Activated CD4-positive, alpha-beta T cell treated with anti-CD3 and anti-CD28 coated beads for 36 hours (primary cell): ENCODE measurements at regions of chr19 and their contacts with region 1.

Region 1: DNA sequence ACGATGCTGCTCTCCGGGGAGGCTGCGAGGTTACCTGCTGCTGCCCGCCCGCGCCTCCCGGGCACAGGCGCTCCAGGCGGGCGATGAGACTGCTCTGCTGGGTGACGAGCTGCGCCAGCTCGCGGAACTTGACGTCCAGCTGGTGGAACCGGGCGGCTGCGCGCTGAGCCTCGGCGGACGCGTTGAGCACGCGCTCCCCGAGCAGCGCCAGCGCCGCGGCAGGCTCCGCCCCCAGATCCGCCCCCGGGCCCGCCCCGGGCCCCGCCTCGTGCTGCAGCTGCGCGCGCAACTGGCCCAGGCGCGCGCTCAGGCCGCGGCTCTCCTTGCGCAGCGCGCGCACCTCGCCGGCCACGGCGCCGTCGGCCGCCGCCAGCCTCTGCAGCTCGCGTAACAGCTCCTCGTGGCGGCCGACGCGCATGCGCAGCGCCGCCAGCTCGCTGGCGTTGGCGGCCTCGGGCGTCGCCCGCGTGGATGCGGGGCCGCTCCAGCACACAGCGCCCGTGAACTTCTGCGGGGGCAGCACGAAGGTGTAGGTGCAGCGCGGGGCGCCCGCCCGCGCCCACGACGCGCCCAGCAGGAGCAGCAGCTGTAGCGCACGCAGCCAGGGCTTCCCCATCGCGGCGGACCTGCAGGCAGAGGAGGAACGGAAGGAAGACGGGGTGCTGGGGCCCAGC is 6.4 kb downstream of the ANGPTL6 start:
- DNase-seq: peak; percentile 94
- ATAC-seq: peak; percentile 90
- H3K4me3 Mint-ChIP-seq: peak overlapping the region; percentile 56
- H3K27ac Mint-ChIP-seq: peak overlapping the region; percentile 69
- H3K4me1 Mint-ChIP-seq: peaks cover 26% of the 10 kb centered on the region
- H3K27me3 Mint-ChIP-seq: no peaks in the 10 kb centered on the region

Region 2: DNA sequence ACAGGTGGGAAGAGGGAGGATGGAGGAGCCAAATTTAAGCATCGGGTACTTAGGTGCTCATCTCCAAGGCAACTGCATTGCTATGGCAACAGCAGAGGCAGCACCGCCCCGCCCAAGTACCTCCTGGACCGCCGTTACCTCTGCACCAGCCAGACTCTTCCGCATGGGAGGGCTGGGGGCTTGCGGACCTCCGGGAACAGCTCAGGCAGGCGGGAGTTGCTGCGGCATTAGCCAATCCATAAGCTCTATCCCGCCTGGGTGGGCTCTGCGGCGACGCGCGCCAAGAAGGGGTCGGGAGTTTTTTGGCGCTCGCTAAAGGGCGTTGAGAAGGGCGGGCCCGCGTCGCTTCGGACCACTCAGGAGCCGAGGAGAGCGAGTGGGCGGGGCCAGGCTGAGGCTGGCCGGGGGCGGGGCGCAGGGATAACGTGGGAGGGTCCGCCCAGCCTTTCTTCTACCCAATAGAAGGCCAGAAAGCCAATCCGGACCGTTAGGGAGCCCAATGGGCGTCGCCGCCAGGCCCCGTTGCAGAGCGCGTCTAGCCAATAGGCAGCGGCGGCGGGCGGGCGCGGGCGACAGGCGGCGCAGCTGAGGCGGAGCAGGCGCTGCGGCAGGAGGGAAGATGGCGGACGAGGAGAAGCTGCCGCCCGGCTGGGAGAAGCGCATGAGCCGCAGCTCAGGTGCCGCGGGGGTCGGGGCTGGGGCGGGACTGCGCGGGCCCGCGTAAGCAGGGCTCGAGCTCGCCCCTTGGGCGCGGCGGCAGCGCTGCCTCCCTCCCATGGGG is 261.2 kb before region 1 on chr19 and contains the start of gene PIN1:
- CTCF ChIA-PET with region 1: no interaction called
- POLR2A ChIA-PET with region 1: no interaction called
- intact Hi-C with region 1: loop called in 1 of 2 experiments (anchors 2 kb)
- DNase-seq: peak; percentile 100
- ATAC-seq: peak; percentile 99
- H3K4me3 Mint-ChIP-seq: peak within 1 kb of the TSS; percentile 86
- H3K27ac Mint-ChIP-seq: peak within 1 kb of the TSS; percentile 88
- H3K4me1 Mint-ChIP-seq: peaks cover 20% of the 10 kb centered on the region
- H3K27me3 Mint-ChIP-seq: no peaks in the 10 kb centered on the region
- total RNA-seq, gene PIN1: 70.4 to 74.2 TPM

Region 3: DNA sequence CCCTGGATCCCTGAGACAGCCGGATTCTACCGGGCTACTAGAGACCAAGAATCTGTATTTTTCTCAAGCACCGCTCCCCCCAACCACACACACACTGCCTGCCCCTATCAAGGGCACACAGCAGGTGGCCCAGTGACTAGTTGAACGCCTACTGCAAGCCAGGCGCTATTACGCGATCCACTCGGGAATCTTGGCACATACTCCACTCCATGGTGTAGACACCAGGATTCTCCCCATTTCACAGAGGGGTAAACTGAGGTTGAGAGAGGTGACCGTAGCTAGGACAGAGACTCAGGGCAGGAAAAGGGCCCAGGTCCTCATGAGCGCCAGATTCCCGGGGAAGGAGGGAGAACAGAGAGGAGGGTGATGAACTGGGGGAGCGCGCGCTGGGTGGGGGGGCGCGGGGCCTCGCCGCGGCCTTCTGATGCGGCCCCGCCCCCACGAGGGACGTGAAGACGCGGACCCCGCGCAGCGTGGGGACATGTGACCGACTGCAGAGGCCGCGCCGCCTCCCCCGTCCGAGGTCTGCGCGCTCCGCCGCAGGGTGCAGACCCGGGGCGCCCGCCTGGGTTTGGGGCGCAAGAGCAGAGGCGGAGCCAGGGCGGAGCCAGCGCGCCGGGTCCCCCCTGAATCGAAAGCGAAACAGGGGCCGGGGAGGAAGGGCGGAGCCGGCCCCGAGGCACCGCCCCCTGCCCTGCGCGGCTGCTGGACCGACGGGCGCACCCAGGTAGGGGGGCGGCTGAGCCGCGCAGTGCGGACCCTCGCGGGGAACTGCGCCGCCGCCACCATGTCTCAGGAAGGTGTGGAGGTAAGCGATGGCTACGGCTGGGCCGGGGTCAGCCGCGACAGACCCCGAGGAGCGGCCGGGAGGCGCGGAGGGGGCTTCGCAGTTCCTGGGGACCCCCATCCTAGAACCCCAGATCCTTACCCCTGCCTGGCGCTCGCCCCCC is 10.2 kb before region 1 on chr19 and contains the start of gene SHFL:
- CTCF ChIA-PET with region 1: interaction called, 4 read pairs
- POLR2A ChIA-PET with region 1: no interaction called
- intact Hi-C with region 1: loop called (anchors 1 kb)
- DNase-seq: peak; percentile 92
- ATAC-seq: peak; percentile 96
- H3K4me3 Mint-ChIP-seq: peak within 1 kb of the TSS; percentile 78
- H3K27ac Mint-ChIP-seq: peak within 1 kb of the TSS; percentile 74
- H3K4me1 Mint-ChIP-seq: peaks cover 11% of the 10 kb centered on the region
- H3K27me3 Mint-ChIP-seq: no peaks in the 10 kb centered on the region
- total RNA-seq, gene SHFL: 49.8 to 62.6 TPM

Region 4: GRCh38 chr19:10112895-10113591 is 17.0 kb after region 1 on chr19:
- CTCF ChIA-PET with region 1: interaction called, 12 read pairs
- POLR2A ChIA-PET with region 1: interaction called, 4 read pairs
- intact Hi-C with region 1: loop called in 1 of 2 experiments (anchors 2 kb)
- DNase-seq: peak; percentile 83
- ATAC-seq: peak; percentile 50
- H3K4me3 Mint-ChIP-seq: peak overlapping the region; percentile 68
- H3K27ac Mint-ChIP-seq: peak overlapping the region; percentile 90
- H3K4me1 Mint-ChIP-seq: peaks cover 59% of the 10 kb centered on the region
- H3K27me3 Mint-ChIP-seq: no peaks in the 10 kb centered on the region

Region 5: DNA sequence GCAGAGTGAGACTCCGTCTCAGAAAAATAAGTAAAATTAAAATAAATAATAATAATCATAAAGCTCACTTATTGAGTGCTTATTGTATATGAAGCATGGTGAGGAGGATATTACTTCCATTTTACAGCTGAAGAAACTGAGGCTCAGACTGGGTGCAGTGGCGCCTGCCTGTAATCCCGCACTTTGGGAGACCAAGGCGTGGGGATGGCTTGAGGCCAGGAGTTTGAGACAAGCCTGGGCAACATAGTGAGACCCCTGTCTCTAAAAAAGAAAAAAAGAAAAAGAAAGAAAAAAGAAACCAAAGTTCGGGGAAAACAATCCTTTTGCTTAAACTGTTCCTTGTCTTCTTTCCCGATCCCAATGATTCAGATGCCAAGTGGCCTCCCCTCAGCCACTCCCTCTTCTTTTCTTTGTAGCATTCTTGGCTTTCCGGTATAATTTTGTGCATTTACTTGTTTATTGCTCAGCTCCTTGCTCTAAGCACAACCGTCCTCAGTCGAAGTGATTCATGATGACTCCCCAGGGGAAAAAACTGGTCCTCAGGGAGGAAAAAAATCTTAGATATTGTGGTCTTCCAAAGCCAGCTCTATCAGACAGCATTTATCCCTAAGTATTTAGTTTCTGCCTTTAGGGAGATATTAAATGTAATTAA is 24.6 kb after region 1 on chr19:
- CTCF ChIA-PET with region 1: interaction called, 5 read pairs
- POLR2A ChIA-PET with region 1: no interaction called
- intact Hi-C with region 1: loop called in 1 of 2 experiments (anchors 1 kb)
- DNase-seq: no peak
- ATAC-seq: no peak
- H3K4me3 Mint-ChIP-seq: no peak overlapping the region
- H3K27ac Mint-ChIP-seq: no peak overlapping the region
- H3K4me1 Mint-ChIP-seq: peaks cover 15% of the 10 kb centered on the region
- H3K27me3 Mint-ChIP-seq: no peaks in the 10 kb centered on the region

Region 6: GRCh38 chr19:10205636-10206035 is 109.6 kb after region 1 on chr19:
- CTCF ChIA-PET with region 1: no interaction called
- POLR2A ChIA-PET with region 1: no interaction called
- intact Hi-C with region 1: no loop called
- DNase-seq: no peak
- ATAC-seq: no peak
- H3K4me3 Mint-ChIP-seq: no peak overlapping the region
- H3K27ac Mint-ChIP-seq: no peak overlapping the region
- H3K4me1 Mint-ChIP-seq: no peaks in the 10 kb centered on the region
- H3K27me3 Mint-ChIP-seq: no peaks in the 10 kb centered on the region

Region 7: DNA sequence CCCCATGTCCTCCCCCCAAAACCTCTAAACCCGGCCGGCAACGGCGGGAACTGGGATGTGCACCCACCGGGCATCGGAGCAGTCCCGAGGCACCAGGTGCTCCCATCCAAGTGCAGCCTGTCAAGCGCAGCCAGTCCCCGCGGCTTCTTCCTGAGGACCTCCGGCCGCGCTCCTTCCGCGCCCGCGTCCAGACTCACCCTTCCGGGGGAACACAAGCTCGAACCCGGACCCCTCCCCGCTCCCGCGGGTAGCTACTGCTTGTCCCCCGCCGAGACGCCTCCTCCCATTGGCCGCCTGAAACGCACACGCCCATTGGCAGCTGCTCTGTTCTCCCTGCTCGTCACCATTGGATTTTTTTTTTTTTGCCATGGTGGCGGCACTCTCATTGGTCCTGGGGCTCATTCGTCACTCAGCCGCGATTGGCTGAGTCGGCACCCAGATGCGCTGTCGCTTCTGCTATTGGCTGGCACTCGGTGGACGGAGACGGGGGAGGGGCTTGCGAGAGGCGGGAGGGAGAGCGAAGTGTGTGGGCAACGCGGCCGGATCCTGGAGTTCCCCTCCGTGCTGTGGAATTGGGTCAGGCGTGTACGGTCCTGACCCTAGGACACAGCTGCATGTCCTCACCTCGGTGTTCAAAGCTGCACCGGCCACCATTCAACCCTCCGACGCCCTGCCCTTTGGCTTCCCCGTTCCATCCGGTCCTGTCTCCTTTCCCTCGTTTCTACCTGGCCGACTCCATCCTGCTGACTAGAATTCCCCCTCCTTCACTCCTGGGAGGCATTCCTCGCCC is 284.4 kb after region 1 on chr19 and contains the start of gene TYK2:
- CTCF ChIA-PET with region 1: no interaction called
- POLR2A ChIA-PET with region 1: interaction called, 3 read pairs
- intact Hi-C with region 1: loop called in 1 of 2 experiments (anchors 2 kb)
- DNase-seq: peak; percentile 97
- ATAC-seq: peak; percentile 99
- H3K4me3 Mint-ChIP-seq: peak within 1 kb of the TSS; percentile 86
- H3K27ac Mint-ChIP-seq: peak within 1 kb of the TSS; percentile 96
- H3K4me1 Mint-ChIP-seq: peaks cover 22% of the 10 kb centered on the region
- H3K27me3 Mint-ChIP-seq: no peaks in the 10 kb centered on the region
- total RNA-seq, gene TYK2: 151 to 197 TPM

Region 8: GRCh38 chr19:10416380-10417257 is 320.5 kb after region 1 on chr19:
- CTCF ChIA-PET with region 1: no interaction called
- POLR2A ChIA-PET with region 1: interaction called, 4 read pairs
- intact Hi-C with region 1: loop called in 1 of 2 experiments (anchors 1 kb)
- DNase-seq: peak; percentile 98
- ATAC-seq: peak; percentile 61
- H3K4me3 Mint-ChIP-seq: peak overlapping the region; percentile 59
- H3K27ac Mint-ChIP-seq: peak overlapping the region; percentile 45
- H3K4me1 Mint-ChIP-seq: peaks cover 51% of the 10 kb centered on the region
- H3K27me3 Mint-ChIP-seq: peaks cover 36% of the 10 kb centered on the region